Esophagus squamous epithelium (tissue), 5 donors: ENCODE measurements at regions of chr7 and their contacts with region 1.

Region 1: GRCh38 chr7:132580717-132581285 is 4.5 kb upstream of the PLXNA4 start:
- DNase-seq: no peak
- H3K4me3 ChIP-seq: no peak overlapping the region
- H3K27ac ChIP-seq: no peak overlapping the region
- H3K4me1 ChIP-seq: peaks cover 0 to 16% (median 5%) of the 10 kb centered on the region in 3 donors
- H3K27me3 ChIP-seq: peaks cover 0 to 65% (median 6%) of the 10 kb centered on the region in 4 donors
- CTCF ChIP-seq: peak; percentile 26 to 78 (median 68)
- POLR2A ChIP-seq: no peak

Region 2: DNA sequence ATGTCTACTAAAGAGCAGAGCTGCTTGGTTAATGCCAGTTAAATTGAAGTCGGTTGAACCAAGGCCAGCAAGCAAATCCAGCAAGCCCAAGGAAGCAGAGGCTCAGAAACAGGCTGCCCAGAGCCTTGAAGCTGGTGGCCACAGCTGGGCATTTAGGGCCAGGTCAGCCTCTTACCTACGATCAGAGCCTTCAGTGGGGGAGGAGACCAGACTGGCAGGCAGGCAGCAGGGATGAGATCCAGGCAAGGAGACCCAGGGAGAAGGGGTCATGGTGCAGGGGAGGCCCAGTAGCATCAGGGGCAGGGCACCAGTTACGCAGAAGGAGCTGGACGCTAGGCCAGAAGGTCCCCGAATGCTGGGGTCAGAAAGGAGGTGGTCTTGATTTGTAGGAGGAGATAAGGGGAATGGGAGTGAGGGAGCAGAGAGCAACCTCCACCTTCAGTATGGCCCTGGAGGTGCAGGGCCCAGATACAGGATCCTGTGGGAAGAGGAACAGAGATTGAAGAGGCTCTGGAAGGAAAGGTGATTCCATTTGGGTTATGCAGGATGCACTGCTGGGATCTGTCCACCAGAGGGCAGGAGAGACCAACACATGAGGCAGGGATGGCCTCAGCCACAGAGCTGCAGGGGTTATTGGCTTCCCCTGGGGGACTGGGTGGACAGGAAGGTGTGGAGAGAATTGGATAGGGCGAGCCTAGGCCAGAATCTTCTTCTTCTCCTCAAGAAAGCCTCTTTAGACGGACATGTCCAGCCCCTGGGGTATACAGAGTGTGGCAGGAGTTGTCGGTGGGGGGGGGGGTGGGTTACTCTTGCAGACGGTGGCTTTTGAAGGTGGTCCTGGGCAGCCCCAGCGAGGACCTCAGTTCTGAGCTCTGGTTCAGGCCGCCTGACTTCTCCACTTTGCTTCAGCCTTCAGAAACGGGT is 891.8 kb before region 1 on chr7:
- intact Hi-C with region 1: loop called (anchors 10 kb)
- DNase-seq: no peak
- H3K4me3 ChIP-seq: no peak overlapping the region
- H3K27ac ChIP-seq: no peak overlapping the region
- H3K4me1 ChIP-seq: peaks cover 0 to 8% (median 3%) of the 10 kb centered on the region in 3 donors
- H3K27me3 ChIP-seq: peaks cover 0 to 78% (median 0%) of the 10 kb centered on the region in 4 donors
- CTCF ChIP-seq: peak; percentile 62 to 95 (median 88)
- POLR2A ChIP-seq: no peak

Region 3: GRCh38 chr7:132318352-132319318 is 262.2 kb before region 1 on chr7:
- intact Hi-C with region 1: loop called (anchors 5 kb)
- DNase-seq: no peak
- H3K4me3 ChIP-seq: no peak overlapping the region
- H3K27ac ChIP-seq: no peak overlapping the region
- H3K4me1 ChIP-seq: peaks cover 0 to 13% (median 0%) of the 10 kb centered on the region in 3 donors
- H3K27me3 ChIP-seq: peaks cover 0 to 38% (median 3%) of the 10 kb centered on the region in 4 donors
- CTCF ChIP-seq: peak; percentile 80 to 93 (median 87)
- POLR2A ChIP-seq: no peak